PC-3 (cell line): ENCODE measurements at regions of chr1 and their contacts with region 1.

Region 1: GRCh38 chr1:192860478-192861185 is 51.8 kb downstream of the RGS2 start:
- DNase-seq: peak; percentile 36
- ATAC-seq: peak; percentile 43
- H3K4me3 ChIP-seq: no peak overlapping the region
- H3K27ac ChIP-seq: peak overlapping the region; percentile 98
- H3K4me1 ChIP-seq: peaks cover 27% of the 10 kb centered on the region
- H3K27me3 ChIP-seq: no peaks in the 10 kb centered on the region
- CTCF ChIP-seq: no peak

Region 2: GRCh38 chr1:192814805-192815204 is 45.8 kb before region 1 on chr1:
- CTCF ChIA-PET with region 1: no interaction called
- POLR2A ChIA-PET with region 1: interaction called, 3 read pairs
- intact Hi-C with region 1: loop called (anchors 1 kb)
- DNase-seq: no peak
- ATAC-seq: no peak
- H3K4me3 ChIP-seq: no peak overlapping the region
- H3K27ac ChIP-seq: no peak overlapping the region
- H3K4me1 ChIP-seq: peaks cover 4% of the 10 kb centered on the region; the same call in 1 of the 2 replicates
- H3K27me3 ChIP-seq: no peaks in the 10 kb centered on the region
- CTCF ChIP-seq: no peak

Region 3: DNA sequence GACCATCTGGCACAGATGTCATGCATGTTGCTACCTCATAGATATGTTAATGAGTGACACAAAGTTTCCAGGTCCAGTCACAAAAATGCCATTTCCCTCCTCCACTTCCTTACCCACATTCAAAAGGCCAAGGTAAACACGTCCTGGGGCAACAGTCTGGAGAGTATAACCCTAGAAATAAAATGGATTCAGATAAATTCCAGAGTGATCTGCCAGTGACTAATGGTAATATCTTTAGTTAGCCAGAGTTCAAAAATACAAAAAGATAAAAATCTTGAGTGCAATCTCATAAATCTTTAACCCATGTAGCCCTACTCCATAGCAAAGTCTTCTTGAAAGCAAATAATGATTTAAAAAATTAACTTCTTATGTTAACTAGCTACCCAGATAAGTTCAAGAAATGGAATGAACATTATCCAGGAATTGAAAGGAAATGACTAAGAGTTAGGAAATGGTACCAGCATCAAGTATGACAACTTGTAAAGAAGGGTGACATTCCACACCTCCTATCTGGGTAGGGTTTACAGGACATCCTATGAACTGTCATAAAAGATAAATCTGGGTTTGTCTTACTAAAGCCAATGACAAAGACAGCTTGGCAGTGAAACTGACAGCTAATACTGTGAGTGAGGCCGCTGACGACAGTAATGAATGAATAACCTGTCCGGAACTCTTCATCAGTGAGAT is 33.7 kb before region 1 on chr1:
- CTCF ChIA-PET with region 1: no interaction called
- POLR2A ChIA-PET with region 1: interaction called, 7 read pairs
- intact Hi-C with region 1: loop called (anchors 1 kb)
- DNase-seq: peak; percentile 91
- ATAC-seq: peak; percentile 93
- H3K4me3 ChIP-seq: peak overlapping the region; percentile 44; the same call in 1 of the 2 replicates
- H3K27ac ChIP-seq: peak overlapping the region; percentile 97
- H3K4me1 ChIP-seq: peaks cover 33% of the 10 kb centered on the region
- H3K27me3 ChIP-seq: no peaks in the 10 kb centered on the region
- CTCF ChIP-seq: no peak

Region 4: DNA sequence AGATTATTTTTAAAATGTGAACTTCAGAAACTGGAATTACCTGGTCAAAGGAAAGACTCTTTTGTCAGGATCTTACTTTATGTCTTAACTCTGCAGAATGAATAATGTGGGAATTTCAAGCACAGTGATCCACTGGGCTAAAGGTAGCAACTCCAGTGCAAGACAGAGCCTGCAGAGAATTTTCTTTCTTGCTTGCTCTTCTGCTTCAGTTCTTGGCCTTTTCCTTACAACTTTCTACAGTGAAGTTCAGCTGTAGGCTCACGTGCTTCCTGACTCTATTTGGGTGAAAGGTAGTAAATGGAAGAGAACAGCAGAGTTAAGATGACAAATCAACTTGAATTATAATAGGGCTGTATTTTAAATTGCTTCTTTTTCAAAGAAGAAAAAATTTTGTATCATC is 12.4 kb after region 1 on chr1:
- CTCF ChIA-PET with region 1: no interaction called
- POLR2A ChIA-PET with region 1: no interaction called
- intact Hi-C with region 1: no loop called
- DNase-seq: no peak
- ATAC-seq: no peak; the same call in 1 of the 2 replicates
- H3K4me3 ChIP-seq: no peak overlapping the region
- H3K27ac ChIP-seq: no peak overlapping the region
- H3K4me1 ChIP-seq: no peaks in the 10 kb centered on the region
- H3K27me3 ChIP-seq: no peaks in the 10 kb centered on the region
- CTCF ChIP-seq: no peak

Region 5: GRCh38 chr1:192904438-192904895 is 43.8 kb after region 1 on chr1:
- CTCF ChIA-PET with region 1: no interaction called
- POLR2A ChIA-PET with region 1: interaction called, 3 read pairs
- intact Hi-C with region 1: loop called (anchors 1 kb)
- DNase-seq: peak; percentile 65
- ATAC-seq: peak; percentile 93
- H3K4me3 ChIP-seq: peak overlapping the region; percentile 57
- H3K27ac ChIP-seq: peak overlapping the region; percentile 69
- H3K4me1 ChIP-seq: peaks cover 14% of the 10 kb centered on the region
- H3K27me3 ChIP-seq: no peaks in the 10 kb centered on the region
- CTCF ChIP-seq: no peak

Region 6: GRCh38 chr1:192951691-192952460 is 91.2 kb after region 1 on chr1:
- CTCF ChIA-PET with region 1: no interaction called
- POLR2A ChIA-PET with region 1: no interaction called
- intact Hi-C with region 1: loop called (anchors 5 kb)
- DNase-seq: peak; percentile 75
- ATAC-seq: peak; percentile 98
- H3K4me3 ChIP-seq: no peak overlapping the region
- H3K27ac ChIP-seq: peak overlapping the region; percentile 54
- H3K4me1 ChIP-seq: peaks cover 16% of the 10 kb centered on the region
- H3K27me3 ChIP-seq: no peaks in the 10 kb centered on the region
- CTCF ChIP-seq: no peak

Region 7: DNA sequence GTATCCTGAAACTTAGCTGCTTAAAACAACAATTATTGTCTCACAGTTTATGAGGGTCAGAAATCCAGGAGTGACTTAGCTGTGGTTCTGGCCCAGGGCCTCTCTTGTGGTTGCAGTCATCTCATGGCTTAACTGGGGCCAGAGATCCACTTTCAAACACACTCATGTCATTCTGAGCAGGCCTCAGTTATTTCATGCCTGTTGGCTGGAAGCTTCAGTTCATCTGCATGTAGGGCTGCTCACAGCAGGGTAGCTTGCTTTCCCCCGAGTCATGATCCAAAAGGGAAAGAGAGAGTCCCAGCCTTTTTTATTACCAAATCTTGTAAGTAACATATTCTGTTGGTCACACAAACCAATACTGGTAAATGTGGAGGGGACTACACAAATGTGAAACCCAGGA is 422.4 kb after region 1 on chr1:
- CTCF ChIA-PET with region 1: no interaction called
- POLR2A ChIA-PET with region 1: no interaction called
- intact Hi-C with region 1: no loop called
- DNase-seq: no peak
- ATAC-seq: no peak
- H3K4me3 ChIP-seq: no peak overlapping the region
- H3K27ac ChIP-seq: no peak overlapping the region
- H3K4me1 ChIP-seq: no peaks in the 10 kb centered on the region
- H3K27me3 ChIP-seq: no peaks in the 10 kb centered on the region
- CTCF ChIP-seq: no peak